ENCODE measurements at regions of chr9 and their contacts with region 1.

Region 1: GRCh38 chr9:35696525-35697215 is 6.9 kb upstream of the TPM2 start:
- DNase-seq: peak; percentile 65
- H3K4me3 Mint-ChIP-seq: no peak overlapping the region
- H3K27ac Mint-ChIP-seq: no peak overlapping the region
- H3K4me1 Mint-ChIP-seq: no peaks in the 10 kb centered on the region
- H3K27me3 Mint-ChIP-seq: no peaks in the 10 kb centered on the region
- CTCF ChIP-seq: peak; percentile 75

Region 2: DNA sequence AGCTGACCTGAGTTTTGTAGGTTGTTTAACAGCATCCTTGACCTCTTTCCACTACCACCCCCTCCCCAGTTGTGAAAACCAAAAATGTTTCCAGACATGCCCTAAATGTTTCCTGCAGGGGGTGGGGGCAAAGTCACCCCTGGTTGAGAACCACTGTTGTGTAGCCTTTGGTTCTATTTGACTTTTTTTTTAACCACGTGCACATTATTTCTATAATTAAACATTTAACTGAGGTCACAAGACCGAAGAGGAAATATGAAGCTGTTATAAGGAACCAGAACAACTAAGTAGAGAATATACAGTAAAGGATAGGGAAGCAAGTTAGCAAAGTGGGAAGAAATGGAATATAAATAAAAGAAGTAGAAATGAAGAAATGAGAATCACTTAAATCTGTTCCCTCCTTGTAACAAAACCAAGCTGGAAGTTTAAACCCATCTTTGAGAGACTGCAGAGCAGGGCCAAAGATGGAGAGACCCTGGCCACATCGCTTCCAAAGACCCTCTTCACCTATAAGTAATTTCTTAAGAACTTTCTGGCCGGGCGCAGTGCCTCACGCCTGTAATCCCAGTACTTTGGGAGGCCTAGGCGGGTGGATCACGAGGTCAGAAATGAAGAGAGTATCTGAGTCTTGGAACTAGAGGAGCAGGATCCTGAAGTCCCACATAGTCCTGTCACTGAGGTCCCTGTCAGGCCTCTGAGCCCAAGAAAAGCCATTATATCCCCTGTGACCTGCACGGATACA is 60.4 kb before region 1 on chr9:
- CTCF ChIA-PET with region 1: no interaction called
- intact Hi-C with region 1: no loop called
- DNase-seq: no peak
- H3K4me3 Mint-ChIP-seq: no peak overlapping the region
- H3K27ac Mint-ChIP-seq: no peak overlapping the region
- H3K4me1 Mint-ChIP-seq: no peaks in the 10 kb centered on the region
- H3K27me3 Mint-ChIP-seq: peaks cover 20% of the 10 kb centered on the region
- CTCF ChIP-seq: no peak

Region 3: DNA sequence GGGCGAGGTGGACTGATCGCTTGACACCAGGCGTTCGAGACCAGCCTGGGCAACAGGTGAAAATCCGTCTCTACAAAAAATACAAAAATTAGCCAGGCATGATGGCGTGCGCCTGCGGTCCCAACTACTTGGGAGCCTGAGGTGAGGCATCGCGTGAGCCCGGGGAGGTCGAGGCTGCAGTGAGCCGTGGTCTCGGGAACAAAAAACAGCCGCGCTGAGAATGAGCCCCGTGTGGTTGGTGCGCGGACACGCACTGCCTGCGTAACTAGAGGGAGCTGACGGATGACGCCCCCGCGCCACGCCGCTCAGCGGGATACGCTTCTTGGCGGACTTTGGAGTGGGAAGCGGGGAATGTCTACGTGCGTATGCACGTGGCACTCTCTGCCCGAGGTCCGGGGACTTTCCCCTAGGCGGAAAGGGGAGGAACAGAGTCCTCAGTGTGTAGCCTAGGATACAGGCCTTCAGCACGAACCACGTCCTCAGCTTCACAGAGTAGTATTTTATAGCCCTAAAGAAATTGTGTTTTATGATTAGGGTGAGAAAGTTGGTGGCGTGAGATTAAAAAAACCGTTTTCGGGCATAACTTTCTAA is 39.0 kb before region 1 on chr9 and contains the start of gene RMRP:
- CTCF ChIA-PET with region 1: interaction called, 12 read pairs
- intact Hi-C with region 1: loop called (anchors 5 kb)
- DNase-seq: peak; percentile 94
- H3K4me3 Mint-ChIP-seq: peak within 1 kb of the TSS; percentile 84
- H3K27ac Mint-ChIP-seq: peak within 1 kb of the TSS; percentile 100
- H3K4me1 Mint-ChIP-seq: peaks cover 14% of the 10 kb centered on the region
- H3K27me3 Mint-ChIP-seq: no peaks in the 10 kb centered on the region
- CTCF ChIP-seq: peak; percentile 24
- total RNA-seq, gene RMRP: 8,471 and 11,520 TPM in 2 replicates

Region 4: GRCh38 chr9:35664531-35665470 is 31.9 kb before region 1 on chr9 and contains the start of gene ARHGEF39:
- CTCF ChIA-PET with region 1: interaction called, 10 read pairs
- intact Hi-C with region 1: loop called (anchors 5 kb)
- DNase-seq: peak; percentile 84
- H3K4me3 Mint-ChIP-seq: peak within 1 kb of the TSS; percentile 81
- H3K27ac Mint-ChIP-seq: peak within 1 kb of the TSS; percentile 20
- H3K4me1 Mint-ChIP-seq: peaks cover 47% of the 10 kb centered on the region
- H3K27me3 Mint-ChIP-seq: no peaks in the 10 kb centered on the region
- CTCF ChIP-seq: no peak
- total RNA-seq, gene ARHGEF39: 14.2 and 15.4 TPM in 2 replicates

Region 5: GRCh38 chr9:35798658-35799374 is 102.1 kb after region 1 on chr9:
- CTCF ChIA-PET with region 1: no interaction called
- intact Hi-C with region 1: no loop called
- DNase-seq: no peak
- H3K4me3 Mint-ChIP-seq: no peak overlapping the region
- H3K27ac Mint-ChIP-seq: no peak overlapping the region
- H3K4me1 Mint-ChIP-seq: peaks cover 18% of the 10 kb centered on the region
- H3K27me3 Mint-ChIP-seq: no peaks in the 10 kb centered on the region
- CTCF ChIP-seq: no peak

Region 6: GRCh38 chr9:35835216-35835632 is 138.6 kb after region 1 on chr9:
- CTCF ChIA-PET with region 1: no interaction called
- intact Hi-C with region 1: no loop called
- DNase-seq: no peak
- H3K4me3 Mint-ChIP-seq: no peak overlapping the region
- H3K27ac Mint-ChIP-seq: no peak overlapping the region
- H3K4me1 Mint-ChIP-seq: peaks cover 24% of the 10 kb centered on the region
- H3K27me3 Mint-ChIP-seq: peaks cover 17% of the 10 kb centered on the region
- CTCF ChIP-seq: no peak

Region 7: GRCh38 chr9:36292631-36293030 is 596.0 kb after region 1 on chr9:
- CTCF ChIA-PET with region 1: no interaction called
- intact Hi-C with region 1: no loop called
- DNase-seq: no peak
- H3K4me3 Mint-ChIP-seq: no peak overlapping the region
- H3K27ac Mint-ChIP-seq: no peak overlapping the region
- H3K4me1 Mint-ChIP-seq: no peaks in the 10 kb centered on the region
- H3K27me3 Mint-ChIP-seq: no peaks in the 10 kb centered on the region
- CTCF ChIP-seq: no peak

Measured in Calu3 (cell line).